Natural killer cell (primary cell): ENCODE measurements at regions of chrX and their contacts with region 1.

Region 1: GRCh38 chrX:19805046-19805690 is 82.2 kb downstream of the SH3KBP1 start:
- DNase-seq: peak in 1 of 2 donors; percentile 62
- ATAC-seq: peak; percentile 55 to 70 (median 64)
- H3K4me3 ChIP-seq: no peak overlapping the region
- H3K4me3 Mint-ChIP-seq: peak overlapping the region; percentile 60
- H3K27ac ChIP-seq: peak overlapping the region; percentile 52
- H3K27ac Mint-ChIP-seq: peak overlapping the region; percentile 70 to 79
- H3K4me1 ChIP-seq: peaks cover 49% of the 10 kb centered on the region
- H3K4me1 Mint-ChIP-seq: peaks cover 49 to 56% of the 10 kb centered on the region in 2 donors
- H3K27me3 ChIP-seq: no peaks in the 10 kb centered on the region
- H3K27me3 Mint-ChIP-seq: peaks cover 0 to 6% of the 10 kb centered on the region in 2 donors
- CTCF ChIP-seq: no peak

Region 2: DNA sequence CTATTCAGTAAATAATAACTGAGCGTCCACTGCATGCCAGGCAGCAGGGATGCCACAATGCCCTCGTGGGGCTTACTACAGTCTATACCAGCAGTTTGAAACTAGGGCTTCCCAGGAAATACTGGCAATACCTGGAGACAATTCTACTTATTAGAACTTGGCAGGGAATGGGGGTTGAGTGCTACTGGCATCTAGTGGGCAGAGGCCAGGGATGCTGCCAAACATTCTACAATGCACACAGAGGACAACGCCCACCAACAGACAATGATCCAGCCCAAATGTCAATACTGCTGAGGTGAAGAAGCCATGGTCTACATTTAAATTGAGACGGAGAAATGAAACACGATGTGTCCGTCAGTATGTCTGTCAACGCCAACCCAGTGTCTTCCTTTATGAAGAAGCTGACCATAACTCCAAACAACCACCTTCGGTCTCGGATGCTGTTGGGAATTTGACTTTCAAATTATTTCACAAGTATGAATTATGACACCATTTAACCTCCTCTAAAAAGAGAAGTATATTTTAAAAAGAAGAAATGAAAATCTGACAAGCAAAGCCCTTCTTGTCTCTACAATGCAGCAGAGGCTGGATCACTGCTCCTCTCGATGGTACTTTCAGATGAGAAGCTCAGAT is 166.2 kb before region 1 on chrX:
- intact Hi-C with region 1: no loop called
- DNase-seq: no peak
- ATAC-seq: no peak
- H3K4me3 ChIP-seq: no peak overlapping the region
- H3K4me3 Mint-ChIP-seq: no peak overlapping the region
- H3K27ac ChIP-seq: no peak overlapping the region
- H3K27ac Mint-ChIP-seq: peak overlapping the region; percentile 48 to 75
- H3K4me1 ChIP-seq: peaks cover 13% of the 10 kb centered on the region
- H3K4me1 Mint-ChIP-seq: peaks cover 27% of the 10 kb centered on the region in 2 donors
- H3K27me3 ChIP-seq: no peaks in the 10 kb centered on the region
- H3K27me3 Mint-ChIP-seq: no peaks in the 10 kb centered on the region
- CTCF ChIP-seq: no peak

Region 3: GRCh38 chrX:19758539-19758938 is 46.6 kb before region 1 on chrX:
- intact Hi-C with region 1: no loop called
- DNase-seq: no peak
- ATAC-seq: peak in 1 of 3 donors; percentile 60
- H3K4me3 ChIP-seq: no peak overlapping the region
- H3K4me3 Mint-ChIP-seq: peak overlapping the region; percentile 30
- H3K27ac ChIP-seq: no peak overlapping the region
- H3K27ac Mint-ChIP-seq: peak overlapping the region; percentile 78 to 83
- H3K4me1 ChIP-seq: peaks cover 15% of the 10 kb centered on the region
- H3K4me1 Mint-ChIP-seq: peaks cover 54 to 60% of the 10 kb centered on the region in 2 donors
- H3K27me3 ChIP-seq: no peaks in the 10 kb centered on the region
- H3K27me3 Mint-ChIP-seq: no peaks in the 10 kb centered on the region
- CTCF ChIP-seq: no peak

Region 4: GRCh38 chrX:19846995-19847790 is 42.0 kb after region 1 on chrX:
- intact Hi-C with region 1: loop called (anchors 5 kb)
- DNase-seq: peak in 1 of 2 donors; percentile 35
- ATAC-seq: peak; percentile 57 to 71 (median 59)
- H3K4me3 ChIP-seq: no peak overlapping the region
- H3K4me3 Mint-ChIP-seq: peak overlapping the region; percentile 26
- H3K27ac ChIP-seq: peak overlapping the region; percentile 34
- H3K27ac Mint-ChIP-seq: peak overlapping the region; percentile 72 to 84
- H3K4me1 ChIP-seq: peaks cover 37% of the 10 kb centered on the region
- H3K4me1 Mint-ChIP-seq: peaks cover 21 to 23% of the 10 kb centered on the region in 2 donors
- H3K27me3 ChIP-seq: no peaks in the 10 kb centered on the region
- H3K27me3 Mint-ChIP-seq: no peaks in the 10 kb centered on the region
- CTCF ChIP-seq: no peak